ENCODE measurements at regions of chr1 and their contacts with region 1.

Region 1: GRCh38 chr1:171984850-171985485 is 143.7 kb downstream of the DNM3 start:
- DNase-seq: peak in 1 of 2 experiments; percentile 38
- H3K4me3 ChIP-seq: no peak overlapping the region
- H3K27ac ChIP-seq: no peak overlapping the region
- H3K4me1 ChIP-seq: no peaks in the 10 kb centered on the region
- H3K27me3 ChIP-seq: no peaks in the 10 kb centered on the region
- CTCF ChIP-seq: peak; percentile 82

Region 2: DNA sequence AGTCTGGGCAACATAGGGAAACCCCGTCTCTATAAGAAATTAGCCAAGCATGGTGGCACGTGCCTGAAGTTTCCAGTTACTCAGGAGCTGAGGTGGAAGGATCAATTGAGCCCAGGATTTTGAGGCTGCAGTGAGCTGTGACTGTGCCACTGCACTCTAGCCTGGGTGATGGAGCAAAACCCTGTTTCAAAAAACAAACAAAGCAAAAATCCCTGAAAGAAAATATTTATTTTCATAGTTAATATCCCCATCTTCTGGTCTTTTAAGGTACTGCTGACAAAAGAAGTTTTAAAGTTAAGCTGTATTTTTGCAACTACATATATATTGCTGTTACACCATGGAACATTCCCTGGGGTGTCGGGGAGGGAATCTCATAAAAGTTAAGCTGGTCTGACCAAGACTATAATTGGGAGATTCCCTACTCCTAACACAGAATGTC is 269.1 kb before region 1 on chr1:
- CTCF ChIA-PET with region 1: interaction called, 5 read pairs
- POLR2A ChIA-PET with region 1: no interaction called
- intact Hi-C with region 1: loop called (anchors 10 kb)
- DNase-seq: no peak
- H3K4me3 ChIP-seq: no peak overlapping the region
- H3K27ac ChIP-seq: no peak overlapping the region
- H3K4me1 ChIP-seq: no peaks in the 10 kb centered on the region
- H3K27me3 ChIP-seq: no peaks in the 10 kb centered on the region
- CTCF ChIP-seq: peak; percentile 69

Region 3: DNA sequence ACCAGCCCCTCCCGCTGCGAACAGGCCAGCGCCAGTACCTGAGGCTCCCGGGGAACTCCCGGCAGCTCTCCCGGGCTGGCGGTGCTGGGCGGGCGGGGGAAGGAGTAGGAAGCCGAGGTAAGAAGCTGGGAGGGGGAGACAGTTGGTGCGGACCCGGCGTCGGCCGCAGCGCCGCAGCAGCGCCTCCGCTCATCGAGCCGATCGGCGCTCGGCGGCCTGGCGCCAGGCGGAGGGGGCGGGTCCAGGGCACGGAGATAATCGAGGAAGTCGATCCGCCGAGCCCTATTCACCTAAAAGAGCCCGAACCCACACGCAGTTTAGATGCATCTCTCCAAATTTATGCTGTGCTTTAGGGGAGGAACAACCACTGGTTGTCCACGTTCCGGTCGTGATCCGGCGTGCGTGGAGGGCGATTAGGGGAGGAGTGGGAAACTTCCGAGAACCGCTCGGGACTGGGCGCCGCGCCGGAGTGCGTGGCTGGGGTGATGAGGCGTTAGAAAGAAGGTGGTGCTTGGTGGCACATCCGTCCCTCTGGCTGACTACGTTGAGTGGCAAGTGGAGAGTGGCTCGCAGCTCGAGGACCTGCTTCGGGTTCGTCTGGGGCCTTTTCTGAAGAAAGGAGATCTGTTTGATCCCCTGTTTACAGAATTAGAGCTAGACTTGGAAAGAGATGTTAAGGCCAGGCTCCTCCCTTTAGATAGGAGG is 242.9 kb before region 1 on chr1 and contains the start of gene VAMP4:
- CTCF ChIA-PET with region 1: interaction called, 13 read pairs
- POLR2A ChIA-PET with region 1: no interaction called
- intact Hi-C with region 1: no loop called
- DNase-seq: peak; percentile 70 to 78
- H3K4me3 ChIP-seq: peak within 1 kb of the TSS; percentile 88
- H3K27ac ChIP-seq: peak within 1 kb of the TSS; percentile 88
- H3K4me1 ChIP-seq: peaks cover 29% of the 10 kb centered on the region
- H3K27me3 ChIP-seq: no peaks in the 10 kb centered on the region
- CTCF ChIP-seq: no peak
- total RNA-seq, gene VAMP4: 5.2 and 9.8 TPM in 2 replicates

Region 4: GRCh38 chr1:171801487-171801891 is 183.5 kb before region 1 on chr1:
- CTCF ChIA-PET with region 1: interaction called, 50 read pairs
- POLR2A ChIA-PET with region 1: no interaction called
- intact Hi-C with region 1: loop called (anchors 1 kb)
- DNase-seq: peak in 1 of 2 experiments; percentile 43
- H3K4me3 ChIP-seq: no peak overlapping the region
- H3K27ac ChIP-seq: no peak overlapping the region
- H3K4me1 ChIP-seq: no peaks in the 10 kb centered on the region
- H3K27me3 ChIP-seq: no peaks in the 10 kb centered on the region
- CTCF ChIP-seq: peak; percentile 82

Measured in PC-9 (cell line).